ENCODE measurements at regions of chr9 and their contacts with region 1.

Region 1: GRCh38 chr9:111597817-111598729 is 1.4 kb downstream of the PTGR1 start:
- DNase-seq: peak; percentile 60 to 77 (median 68)
- ATAC-seq: peak; percentile 47 to 73 (median 64)
- H3K4me3 ChIP-seq: peak overlapping the region; percentile 59 to 70 (median 64)
- H3K27ac ChIP-seq: peak overlapping the region; percentile 64 to 84 (median 77)
- H3K4me1 ChIP-seq: peaks cover 0 to 9% (median 0%) of the 10 kb centered on the region in 3 donors
- H3K27me3 ChIP-seq: no peaks in the 10 kb centered on the region
- CTCF ChIP-seq: peak; percentile 36 to 74 (median 56)

Region 2: DNA sequence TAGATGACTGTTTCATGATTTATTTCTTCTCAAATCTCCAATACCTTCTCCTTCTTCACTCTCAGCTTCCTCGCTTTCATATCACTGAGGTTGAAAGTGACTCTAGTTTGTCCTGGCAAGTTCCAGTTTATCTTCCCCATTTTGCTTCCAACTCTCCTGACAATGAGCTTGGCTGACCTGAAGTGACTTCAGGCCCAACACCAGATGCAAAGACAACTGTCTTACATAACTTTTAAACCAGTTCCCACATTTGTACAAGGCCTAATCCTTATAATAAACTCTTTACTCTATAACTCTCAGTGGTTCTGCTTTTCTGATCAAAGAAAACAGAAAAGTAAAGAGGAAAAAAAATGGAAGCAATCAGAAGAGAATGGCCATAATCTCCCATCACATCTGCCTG is 85.3 kb after region 1 on chr9:
- intact Hi-C with region 1: loop called in 1 of 3 experiments (anchors 10 kb)
- DNase-seq: no peak
- ATAC-seq: no peak
- H3K4me3 ChIP-seq: no peak overlapping the region
- H3K27ac ChIP-seq: no peak overlapping the region
- H3K4me1 ChIP-seq: no peaks in the 10 kb centered on the region
- H3K27me3 ChIP-seq: no peaks in the 10 kb centered on the region
- CTCF ChIP-seq: no peak

Region 3: DNA sequence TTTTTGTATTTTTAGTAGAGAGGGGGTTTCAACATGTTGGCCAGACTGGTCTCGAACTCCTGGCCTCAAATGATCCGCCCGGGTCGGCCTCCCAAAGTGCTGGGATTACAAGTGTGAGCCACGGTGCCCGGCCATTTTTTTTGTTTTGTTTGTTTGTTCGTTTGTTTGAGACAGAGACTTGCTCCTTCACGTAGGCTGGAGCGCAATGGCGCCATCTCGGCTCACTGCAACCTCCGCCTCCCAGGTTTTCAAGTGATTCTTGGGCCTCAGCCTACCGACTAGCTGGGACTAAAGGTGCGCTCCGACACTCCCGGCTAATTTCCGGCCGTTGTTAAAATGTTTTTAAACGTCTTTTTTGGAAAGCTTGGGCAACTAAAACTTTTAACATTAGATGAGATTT is 142.7 kb after region 1 on chr9:
- intact Hi-C with region 1: no loop called
- DNase-seq: no peak
- ATAC-seq: no peak
- H3K4me3 ChIP-seq: no peak overlapping the region
- H3K27ac ChIP-seq: no peak overlapping the region
- H3K4me1 ChIP-seq: no peaks in the 10 kb centered on the region
- H3K27me3 ChIP-seq: no peaks in the 10 kb centered on the region
- CTCF ChIP-seq: no peak

Region 4: DNA sequence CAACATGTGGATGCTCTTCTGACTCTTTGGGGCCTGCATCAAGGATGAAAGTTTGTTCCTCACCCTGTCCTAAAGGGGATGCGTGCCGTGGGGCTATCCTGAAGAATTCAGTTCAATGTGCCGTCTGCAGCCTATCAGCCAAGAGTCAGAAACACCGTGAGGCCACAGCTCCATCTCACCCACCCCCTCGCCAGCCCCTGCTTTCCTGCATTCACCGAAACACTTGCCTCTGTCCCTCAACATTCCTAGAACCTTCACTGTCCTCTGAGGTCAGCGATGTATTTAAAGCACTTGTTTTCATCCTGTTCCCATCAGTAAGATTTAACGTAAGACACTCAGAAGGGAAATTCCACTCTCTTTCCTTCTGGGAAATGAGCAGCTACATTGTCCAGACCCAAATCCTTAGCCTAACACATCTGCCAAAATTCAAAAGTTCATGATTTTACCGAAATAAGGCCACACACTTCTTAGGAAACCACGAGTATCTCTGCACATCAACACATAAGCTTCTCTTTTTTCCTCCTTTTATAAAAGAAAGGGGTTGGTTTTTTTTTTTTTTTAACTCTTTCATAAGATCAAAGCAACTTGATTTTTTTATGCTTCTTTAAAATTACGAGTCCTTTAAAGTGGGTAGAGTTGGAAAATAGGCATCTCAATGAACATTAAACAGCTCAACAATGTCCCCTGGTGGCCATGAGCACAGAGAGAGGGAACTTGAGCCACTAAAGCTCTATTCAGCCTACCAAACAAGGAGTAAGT is 476.4 kb after region 1 on chr9:
- intact Hi-C with region 1: no loop called
- DNase-seq: peak in 4 of 6 donors; percentile 40 to 70 (median 56)
- ATAC-seq: peak; percentile 79 to 91 (median 89)
- H3K4me3 ChIP-seq: no peak overlapping the region
- H3K27ac ChIP-seq: peak overlapping the region in 3 of 4 donors; percentile 22 to 72 (median 70)
- H3K4me1 ChIP-seq: peaks cover 0 to 14% (median 0%) of the 10 kb centered on the region in 3 donors
- H3K27me3 ChIP-seq: no peaks in the 10 kb centered on the region
- CTCF ChIP-seq: peak; percentile 27 to 81 (median 72)

Measured in pancreas (tissue), 10 donors.